Activated CD8-positive, alpha-beta memory T cell treated with anti-CD3 and anti-CD28 coated beads, Interleukin-2, amount 10 ng/mL, durations not matched to agents 7 days and 5 days (primary cell): ENCODE measurements at regions of chr14 and their contacts with region 1.

Region 1: DNA sequence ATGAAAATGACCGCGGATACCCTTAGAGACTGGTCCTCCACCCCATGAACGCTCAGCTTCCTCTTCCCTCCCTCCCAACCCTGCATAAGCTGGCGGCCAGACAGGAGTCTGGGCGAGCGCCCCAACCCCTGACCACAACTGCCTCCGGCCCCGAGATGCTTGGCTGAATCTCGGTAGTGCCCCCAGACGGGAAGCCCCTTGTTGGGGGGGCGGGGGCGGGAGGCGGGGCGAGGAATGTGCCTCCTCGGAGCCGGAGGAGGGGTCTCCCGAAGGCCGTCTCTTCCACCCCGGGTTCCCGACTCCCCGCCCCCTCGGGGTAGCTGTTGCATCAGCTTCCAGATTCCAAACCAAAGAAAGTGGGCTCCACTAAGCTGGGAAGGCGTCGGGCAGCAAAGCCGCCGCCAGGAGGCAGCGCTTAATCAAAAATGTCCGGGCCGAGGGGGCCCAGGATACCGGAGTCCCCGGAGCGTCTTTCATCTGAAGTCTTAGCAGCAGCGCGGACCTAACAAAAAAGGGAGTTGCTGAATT is 7.1 kb upstream of the MRPL52 start:
- DNase-seq: peak; percentile 81
- ATAC-seq: peak; percentile 94
- H3K4me3 Mint-ChIP-seq: peak overlapping the region; percentile 30
- H3K27ac Mint-ChIP-seq: no peak overlapping the region
- H3K4me1 Mint-ChIP-seq: peaks cover 29% of the 10 kb centered on the region
- H3K27me3 Mint-ChIP-seq: peaks cover 28% of the 10 kb centered on the region

Region 2: DNA sequence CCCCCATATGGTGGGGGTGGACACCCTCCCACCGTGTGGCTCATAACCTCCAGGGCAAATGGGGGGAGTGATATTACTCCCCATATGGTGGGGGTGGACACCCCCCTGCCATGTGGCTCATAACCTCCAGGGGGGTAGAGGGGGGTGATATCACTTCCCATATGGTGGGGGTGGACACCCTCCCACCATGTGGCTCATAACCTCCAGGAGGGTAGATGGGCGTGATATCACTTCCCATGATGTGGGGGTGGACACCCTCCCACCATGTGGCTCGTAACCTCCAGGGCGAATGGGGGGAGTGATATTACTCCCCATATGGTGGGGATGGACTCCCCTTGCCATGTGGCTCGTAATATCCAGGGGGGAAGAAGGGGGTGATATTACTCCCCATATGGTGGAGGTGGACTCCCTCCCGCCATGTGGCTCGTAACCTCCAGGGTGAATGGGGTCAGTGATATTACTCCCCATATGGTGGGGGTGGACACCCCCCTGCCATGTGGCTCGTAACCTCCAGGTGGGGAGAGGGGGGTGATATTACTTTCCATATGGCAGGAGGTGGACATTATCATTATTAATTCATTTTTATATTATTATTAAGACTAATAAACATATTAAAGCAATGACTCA is 107.3 kb before region 1 on chr14:
- CTCF ChIA-PET with region 1: no interaction called
- DNase-seq: no peak
- ATAC-seq: no peak
- H3K4me3 Mint-ChIP-seq: no peak overlapping the region
- H3K27ac Mint-ChIP-seq: no peak overlapping the region
- H3K4me1 Mint-ChIP-seq: peaks cover 16% of the 10 kb centered on the region
- H3K27me3 Mint-ChIP-seq: peaks cover 23% of the 10 kb centered on the region

Region 3: GRCh38 chr14:22766456-22767322 is 55.9 kb before region 1 on chr14 and contains the start of gene OXA1L:
- CTCF ChIA-PET with region 1: interaction called, 10 read pairs
- DNase-seq: peak; percentile 98
- ATAC-seq: peak; percentile 92
- H3K4me3 Mint-ChIP-seq: peak within 1 kb of the TSS; percentile 86
- H3K27ac Mint-ChIP-seq: peak within 1 kb of the TSS; percentile 97
- H3K4me1 Mint-ChIP-seq: peaks cover 35% of the 10 kb centered on the region
- H3K27me3 Mint-ChIP-seq: no peaks in the 10 kb centered on the region
- total RNA-seq, gene OXA1L: 106 to 133 TPM

Region 4: DNA sequence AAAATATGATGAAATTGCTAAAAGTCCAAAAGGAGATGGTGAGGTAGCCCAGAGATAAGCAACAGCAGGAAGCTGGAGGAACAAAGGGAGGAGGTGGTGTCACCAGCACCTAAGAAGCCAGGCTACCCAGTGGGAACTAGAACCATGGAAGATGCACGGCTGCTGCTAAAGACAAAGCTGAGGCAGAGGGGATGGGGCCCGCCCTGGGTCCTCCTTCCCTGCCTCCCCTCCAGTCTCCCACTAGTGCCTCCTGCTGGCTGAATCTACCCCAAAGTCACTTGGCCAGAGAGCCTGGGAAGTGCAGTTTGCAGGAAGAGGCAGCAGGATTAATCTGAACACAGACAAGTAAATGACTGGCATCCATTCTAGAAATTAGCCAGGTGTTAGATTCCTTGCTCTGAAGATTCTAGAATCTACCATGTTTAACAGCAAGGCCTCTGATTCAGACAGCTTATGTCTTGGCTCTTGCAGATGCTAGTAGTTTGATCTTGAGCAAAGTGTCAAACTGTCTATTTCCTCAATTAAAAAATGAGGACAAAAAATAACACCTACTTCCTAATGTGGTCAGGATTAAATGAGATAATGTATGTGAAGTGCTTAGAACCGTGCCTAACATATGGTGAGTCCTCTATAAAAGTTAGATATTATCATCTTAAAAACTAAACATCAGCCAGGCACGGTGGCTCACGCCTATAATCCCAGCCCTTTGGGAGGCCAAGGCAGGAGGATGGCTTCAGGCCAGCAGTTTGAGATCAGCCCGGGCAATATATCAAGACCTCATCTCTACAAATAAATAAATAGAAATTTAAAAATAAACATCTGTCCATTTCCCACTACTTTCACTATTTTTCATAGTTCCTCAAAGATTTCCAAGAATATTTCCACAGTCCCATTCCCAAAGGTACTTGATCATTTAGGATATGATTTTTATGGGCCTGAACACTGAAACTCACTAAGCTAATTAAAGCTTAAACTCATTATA is 43.1 kb after region 1 on chr14:
- CTCF ChIA-PET with region 1: interaction called, 57 read pairs
- DNase-seq: no peak
- ATAC-seq: no peak
- H3K4me3 Mint-ChIP-seq: no peak overlapping the region
- H3K27ac Mint-ChIP-seq: no peak overlapping the region
- H3K4me1 Mint-ChIP-seq: peaks cover 9% of the 10 kb centered on the region
- H3K27me3 Mint-ChIP-seq: peaks cover 18% of the 10 kb centered on the region

Region 5: GRCh38 chr14:22886500-22887259 is 64.0 kb after region 1 on chr14:
- CTCF ChIA-PET with region 1: interaction called, 20 read pairs
- DNase-seq: peak; percentile 83
- ATAC-seq: peak; percentile 84
- H3K4me3 Mint-ChIP-seq: peak overlapping the region; percentile 77
- H3K27ac Mint-ChIP-seq: peak overlapping the region; percentile 80
- H3K4me1 Mint-ChIP-seq: peaks cover 36% of the 10 kb centered on the region
- H3K27me3 Mint-ChIP-seq: peaks cover 37% of the 10 kb centered on the region

Region 6: DNA sequence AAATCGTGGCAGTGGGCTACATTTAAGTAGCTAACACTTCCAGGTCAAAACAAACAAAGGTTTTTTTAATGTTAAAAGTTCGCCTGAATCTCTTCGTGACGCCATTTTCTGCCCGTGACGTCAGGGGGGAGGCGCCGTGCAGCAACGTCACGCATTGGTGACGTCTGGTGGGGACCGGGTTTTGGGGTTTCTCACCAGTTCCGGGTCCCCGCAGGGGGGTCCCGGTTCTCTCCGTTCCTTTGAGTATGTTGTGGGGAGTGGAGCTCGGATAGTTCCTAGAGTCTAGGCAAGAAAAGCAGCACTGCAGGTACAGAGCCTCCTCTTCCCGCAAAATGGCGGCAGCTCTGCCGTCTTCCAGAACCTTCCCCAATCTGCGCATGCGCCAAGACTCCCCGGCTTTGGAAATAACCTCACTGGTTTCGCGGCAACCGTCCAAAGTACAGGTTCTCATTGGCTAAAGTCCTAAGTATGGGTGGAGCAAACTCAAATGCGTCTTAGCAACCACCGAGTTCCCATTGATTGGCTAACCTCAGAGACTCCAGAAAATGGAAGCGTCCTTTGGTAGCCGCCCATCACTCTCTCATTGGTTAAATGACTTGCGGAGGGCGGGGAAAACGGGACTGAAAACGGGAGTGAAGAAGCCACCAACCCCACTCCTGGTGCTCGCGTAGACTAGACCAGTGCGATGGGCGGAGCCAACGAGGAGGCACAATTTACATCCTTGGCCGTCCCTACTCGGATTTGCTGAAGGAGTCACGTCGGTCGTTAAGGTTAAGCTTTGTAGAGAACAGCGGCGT is 96.4 kb after region 1 on chr14 and contains the start of gene RBM23:
- CTCF ChIA-PET with region 1: interaction called, 11 read pairs
- DNase-seq: peak; percentile 100
- ATAC-seq: peak; percentile 89
- H3K4me3 Mint-ChIP-seq: peak within 1 kb of the TSS; percentile 88
- H3K27ac Mint-ChIP-seq: peak within 1 kb of the TSS; percentile 99
- H3K4me1 Mint-ChIP-seq: peaks cover 22% of the 10 kb centered on the region
- H3K27me3 Mint-ChIP-seq: no peaks in the 10 kb centered on the region
- total RNA-seq, gene RBM23: 82.9 to 96.7 TPM